ENCODE measurements at regions of chr12 and their contacts with region 1.

Region 1: GRCh38 chr12:110449799-110450497 is at the start of gene ARPC3:
- DNase-seq: peak; percentile 96
- ATAC-seq: peak; percentile 99
- total RNA-seq, gene ARPC3: 109 TPM

Region 2: GRCh38 chr12:110613771-110614684 is 164.1 kb after region 1 on chr12 and contains the start of gene TCTN1:
- intact Hi-C with region 1: loop called (anchors 10 kb)
- DNase-seq: peak; percentile 97
- ATAC-seq: peak; percentile 99
- total RNA-seq, gene TCTN1: 41.0 TPM

Measured in sciatic nerve (tissue), 2 donors.